ENCODE measurements at regions of chr9 and their contacts with region 1.

Region 1: DNA sequence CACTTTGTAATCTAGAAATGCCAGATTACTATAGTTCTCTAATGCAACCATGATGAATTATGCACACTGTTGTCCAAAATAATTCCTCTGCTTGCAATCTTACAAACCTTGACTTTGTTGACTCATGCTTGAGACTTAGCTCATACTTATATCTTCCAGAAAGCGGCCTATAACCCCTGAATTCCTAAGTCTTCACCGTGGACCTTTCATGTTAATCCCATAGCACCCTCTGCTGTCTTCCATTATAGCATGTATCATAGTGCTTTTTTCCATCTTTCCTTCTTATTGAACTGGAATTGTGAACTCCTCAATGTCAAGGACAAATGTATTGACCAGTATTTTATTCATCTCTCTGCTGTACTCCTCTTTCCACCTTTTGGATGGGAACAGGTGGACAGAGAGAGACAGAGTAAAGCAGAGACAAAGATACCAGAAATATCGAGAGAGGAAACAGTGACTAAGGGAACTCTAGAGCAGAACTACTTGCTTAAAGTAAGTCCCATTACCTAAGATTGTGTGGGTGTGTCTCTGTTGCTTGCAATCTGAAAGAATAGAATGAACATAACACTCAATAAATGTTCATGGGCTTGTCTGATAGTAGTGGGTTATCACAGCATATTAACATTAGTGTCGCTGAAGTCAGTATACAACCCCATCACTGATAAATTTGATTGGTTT is 110.1 kb downstream of the LURAP1L start:
- DNase-seq: no peak
- H3K4me3 ChIP-seq: no peak overlapping the region
- H3K27ac ChIP-seq: no peak overlapping the region
- H3K4me1 ChIP-seq: peaks cover 0 to 24% (median 4%) of the 10 kb centered on the region in 3 donors
- H3K27me3 ChIP-seq: peaks cover 0 to 3% (median 0%) of the 10 kb centered on the region in 4 donors
- CTCF ChIP-seq: peak in 5 of 6 experiments; percentile 16 to 55 (median 43)
- POLR2A ChIP-seq: no peak

Region 2: DNA sequence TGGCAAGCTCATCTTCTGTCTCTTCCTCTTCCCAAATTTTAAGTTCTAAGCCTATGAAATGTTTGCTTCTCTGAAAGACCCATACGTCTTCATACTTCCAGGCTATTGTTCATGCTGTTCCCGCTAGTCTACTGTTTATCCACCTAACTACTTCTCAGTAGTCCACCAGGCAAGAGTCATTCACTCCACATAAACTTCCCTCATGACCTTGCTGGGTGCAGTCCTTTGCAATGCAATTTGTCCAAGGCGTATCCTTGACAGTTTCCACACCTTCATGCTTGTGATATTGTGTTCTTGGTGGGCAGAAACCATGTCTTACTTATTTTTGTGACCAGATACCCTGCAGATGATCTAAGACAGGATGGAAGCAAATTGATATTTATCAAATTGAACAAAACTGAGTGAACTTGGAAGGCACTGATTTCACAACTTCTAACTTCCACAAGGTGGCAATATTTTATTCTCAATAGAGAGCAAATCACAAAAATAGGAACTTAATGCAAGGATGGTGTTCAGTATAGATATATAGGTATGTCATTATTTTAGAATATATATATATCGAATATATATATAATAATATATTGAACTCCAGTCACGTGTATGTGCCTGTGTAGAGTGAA is 161.4 kb before region 1 on chr9:
- intact Hi-C with region 1: loop called (anchors 10 kb)
- DNase-seq: no peak
- H3K4me3 ChIP-seq: no peak overlapping the region
- H3K27ac ChIP-seq: no peak overlapping the region
- H3K4me1 ChIP-seq: no peaks in the 10 kb centered on the region
- H3K27me3 ChIP-seq: no peaks in the 10 kb centered on the region
- CTCF ChIP-seq: peak in 4 of 6 experiments; percentile 40 to 57 (median 46)
- POLR2A ChIP-seq: no peak